Posterior cingulate gyrus (tissue), 11 donors: ENCODE measurements at regions of chr11 and their contacts with region 1.

Region 1: GRCh38 chr11:14249121-14249963 is 109.6 kb downstream of the RRAS2 start:
- DNase-seq: peak in 8 of 10 donors; percentile 39 to 95 (median 70)

Region 2: GRCh38 chr11:13772223-13773046 is 476.9 kb before region 1 on chr11:
- intact Hi-C with region 1: loop called (anchors 2 kb)
- DNase-seq: no peak